ENCODE measurements at regions of chr15 and their contacts with region 1.

Region 1: DNA sequence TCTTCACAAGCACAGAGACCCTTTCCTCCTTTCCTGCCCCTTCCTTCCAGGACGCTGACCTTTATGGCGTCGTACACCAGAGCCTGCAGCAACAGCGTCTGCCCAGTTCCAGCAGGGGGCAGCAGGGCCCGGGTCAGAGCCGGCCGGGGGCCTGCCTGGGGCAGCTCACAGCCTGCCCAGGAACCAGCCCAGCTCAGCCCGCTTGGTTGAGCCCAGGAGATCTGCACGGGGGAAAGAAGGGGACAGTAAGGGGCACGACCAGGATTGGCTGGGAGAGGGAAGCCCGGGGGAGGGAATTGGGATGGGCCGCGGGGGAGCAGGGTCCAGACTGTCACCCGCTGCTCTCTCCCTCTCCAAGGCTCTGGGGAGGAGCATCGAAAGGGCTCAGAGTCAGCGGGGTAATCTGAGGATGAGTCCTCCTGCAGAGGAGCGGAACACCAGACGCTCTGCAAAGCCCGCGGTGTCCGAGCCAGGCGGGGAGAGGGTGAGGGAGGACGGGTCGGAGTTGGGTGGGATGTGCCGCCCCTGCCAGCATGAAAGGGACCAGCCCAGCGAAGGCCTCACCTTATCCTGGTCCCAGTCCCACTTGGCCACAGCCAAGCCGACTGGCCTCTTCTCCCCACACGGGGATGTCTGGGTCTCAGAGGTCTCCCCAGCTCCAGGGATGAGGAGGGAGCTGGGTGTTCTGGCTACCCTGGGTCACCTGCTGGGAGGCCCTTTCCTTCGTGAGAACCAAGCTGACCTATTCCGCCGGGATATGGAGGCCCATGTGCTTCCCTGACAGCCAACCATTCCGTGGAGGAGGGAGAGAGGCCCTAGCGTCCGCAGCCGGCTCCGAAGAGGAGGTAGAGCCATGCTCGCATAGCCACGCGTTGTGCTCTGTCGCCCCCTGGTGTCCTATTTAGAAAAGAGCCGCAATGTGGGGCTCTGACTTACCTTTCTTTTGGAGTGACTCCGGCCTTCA is 7.4 kb upstream of the IGDCC3 start:
- DNase-seq: peak; percentile 92
- H3K4me3 Mint-ChIP-seq: peak overlapping the region; percentile 83
- H3K27ac Mint-ChIP-seq: peak overlapping the region; percentile 46
- H3K4me1 Mint-ChIP-seq: peaks cover 11% of the 10 kb centered on the region
- H3K27me3 Mint-ChIP-seq: peaks cover 9% of the 10 kb centered on the region

Region 2: GRCh38 chr15:65312400-65312916 is 72.7 kb before region 1 on chr15:
- CTCF ChIA-PET with region 1: interaction called, 96 read pairs
- intact Hi-C with region 1: no loop called
- DNase-seq: no peak
- H3K4me3 Mint-ChIP-seq: no peak overlapping the region
- H3K27ac Mint-ChIP-seq: no peak overlapping the region
- H3K4me1 Mint-ChIP-seq: no peaks in the 10 kb centered on the region
- H3K27me3 Mint-ChIP-seq: no peaks in the 10 kb centered on the region

Region 3: GRCh38 chr15:65343374-65343981 is 41.7 kb before region 1 on chr15:
- CTCF ChIA-PET with region 1: no interaction called
- intact Hi-C with region 1: no loop called
- DNase-seq: no peak
- H3K4me3 Mint-ChIP-seq: no peak overlapping the region
- H3K27ac Mint-ChIP-seq: no peak overlapping the region
- H3K4me1 Mint-ChIP-seq: no peaks in the 10 kb centered on the region
- H3K27me3 Mint-ChIP-seq: peaks cover 2% of the 10 kb centered on the region

Region 4: GRCh38 chr15:65374821-65375401 is 10.3 kb before region 1 on chr15:
- CTCF ChIA-PET with region 1: interaction called, 17 read pairs
- intact Hi-C with region 1: no loop called
- DNase-seq: no peak
- H3K4me3 Mint-ChIP-seq: no peak overlapping the region
- H3K27ac Mint-ChIP-seq: no peak overlapping the region
- H3K4me1 Mint-ChIP-seq: peaks cover 11% of the 10 kb centered on the region
- H3K27me3 Mint-ChIP-seq: peaks cover 48% of the 10 kb centered on the region

Measured in activated naive CD4-positive, alpha-beta T cell treated with anti-CD3 and anti-CD28 coated beads for 36 hours (primary cell).